Activated CD8-positive, alpha-beta T cell treated with anti-CD3 and anti-CD28 coated beads for 36 hours (primary cell): ENCODE measurements at regions of chr7 and their contacts with region 1.

Region 1: DNA sequence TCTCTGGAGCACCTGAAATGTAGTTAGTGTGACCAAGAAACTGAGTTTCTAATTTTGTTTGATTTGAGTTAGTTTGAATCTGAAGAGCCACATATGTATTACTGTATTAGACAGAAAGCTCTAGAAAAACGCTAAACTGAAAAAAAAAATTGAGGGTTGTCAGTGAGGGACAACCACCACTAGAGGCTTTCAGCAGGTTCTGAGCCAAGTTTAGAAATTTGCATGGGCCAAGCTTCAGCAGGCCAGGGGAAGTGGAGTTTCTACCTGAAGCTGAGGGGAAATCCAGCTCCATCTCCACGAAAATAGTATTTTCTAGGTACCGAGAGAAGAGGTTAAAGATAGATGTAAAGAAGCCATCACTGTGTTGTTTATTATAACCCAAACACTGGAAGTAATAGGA is 77.9 kb upstream of the PLXNA4 start:
- DNase-seq: peak; percentile 33
- ATAC-seq: peak; percentile 35
- H3K4me3 Mint-ChIP-seq: no peak overlapping the region
- H3K27ac Mint-ChIP-seq: no peak overlapping the region
- H3K4me1 Mint-ChIP-seq: peaks cover 35% of the 10 kb centered on the region
- H3K27me3 Mint-ChIP-seq: no peaks in the 10 kb centered on the region
- CTCF ChIP-seq: peak; percentile 35

Region 2: DNA sequence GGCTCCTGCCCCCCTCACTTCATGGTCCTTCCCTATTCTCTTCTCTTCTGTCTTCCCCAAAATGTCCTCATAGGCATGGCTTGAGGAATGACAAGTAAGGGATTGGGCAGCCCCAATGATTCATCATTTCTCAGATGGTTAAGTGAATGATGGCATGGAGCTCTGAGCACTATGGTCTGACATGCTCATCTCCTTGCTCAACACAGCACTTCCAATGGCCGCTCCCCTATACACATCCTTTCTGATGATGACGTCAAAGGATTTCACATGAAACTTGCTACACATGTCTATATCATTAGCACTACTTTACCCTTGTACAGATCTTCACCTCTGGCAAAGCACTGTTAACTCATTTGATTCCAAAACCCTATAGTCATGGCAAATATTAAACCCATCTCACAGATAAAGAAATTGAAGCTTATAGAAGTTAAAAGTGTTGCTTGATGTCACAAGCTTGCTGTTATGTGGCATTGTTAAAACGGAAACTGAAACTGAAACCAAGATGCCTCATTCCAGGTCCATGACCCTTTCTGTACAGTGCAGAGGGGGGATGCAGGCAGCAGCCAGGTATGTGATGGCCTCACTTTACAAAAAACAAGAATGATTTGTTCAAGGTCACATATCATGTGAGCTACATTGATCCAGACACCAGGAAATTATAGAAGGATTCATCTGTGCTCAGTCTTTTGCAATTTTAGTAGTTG is 12.1 kb after region 1 on chr7:
- CTCF ChIA-PET with region 1: interaction called, 16 read pairs
- POLR2A ChIA-PET with region 1: no interaction called
- intact Hi-C with region 1: no loop called
- DNase-seq: peak; percentile 27
- ATAC-seq: peak; percentile 88
- H3K4me3 Mint-ChIP-seq: no peak overlapping the region
- H3K27ac Mint-ChIP-seq: peak overlapping the region; percentile 39
- H3K4me1 Mint-ChIP-seq: peaks cover 9% of the 10 kb centered on the region
- H3K27me3 Mint-ChIP-seq: no peaks in the 10 kb centered on the region
- CTCF ChIP-seq: no peak